K562 (cell line): ENCODE measurements at regions of chr16 and their contacts with region 1.

Region 1: GRCh38 chr16:16120382-16121184 is 102.7 kb downstream of the ABCC6 start:
- DNase-seq: peak; percentile 72 to 82 (median 76)
- ATAC-seq: peak; percentile 91
- H3K4me3 ChIP-seq: no peak overlapping the region
- H3K27ac ChIP-seq: peak overlapping the region; percentile 85
- H3K4me1 ChIP-seq: peaks cover 14 to 18% of the 10 kb centered on the region in 2 experiments; a peak in 4 of 5 replicates
- H3K27me3 ChIP-seq: no peaks in the 10 kb centered on the region
- CTCF ChIP-seq: no peak
- EP300 ChIP-seq: peak; percentile 89
- POLR2A ChIP-seq: no peak
- RAD21 ChIP-seq: no peak

Region 2: DNA sequence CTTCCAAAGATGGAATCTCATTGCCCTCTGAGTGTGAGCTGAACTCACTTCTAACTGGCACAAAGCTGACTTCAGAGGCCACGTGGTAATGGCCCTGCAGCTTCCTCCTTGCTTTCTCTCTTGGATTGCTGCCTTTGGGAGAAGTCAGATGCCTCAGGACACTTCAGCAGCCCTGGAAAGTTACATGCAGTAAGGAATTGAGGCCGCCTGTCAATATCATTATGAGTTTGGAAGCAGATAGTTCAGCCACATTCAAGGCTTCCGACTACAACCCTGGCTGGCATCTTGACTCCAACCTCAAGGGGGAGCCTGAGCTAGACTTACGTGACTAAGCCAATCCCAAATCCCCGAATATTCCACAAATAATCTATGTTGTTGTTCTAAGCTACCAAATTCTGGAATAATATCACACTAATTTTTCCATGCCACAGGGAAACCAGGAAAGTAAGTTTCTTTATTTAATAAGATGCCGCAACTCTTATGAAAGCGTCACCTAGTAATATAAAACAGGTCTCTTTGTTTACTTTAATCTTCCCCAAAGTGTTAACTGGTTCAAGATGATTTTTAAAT is 245.8 kb before region 1 on chr16:
- CTCF ChIA-PET with region 1: no interaction called
- POLR2A ChIA-PET with region 1: no interaction called
- in situ Hi-C with region 1: loop called (anchors 5 kb)
- intact Hi-C with region 1: no loop called
- DNase-seq: peak in 3 of 4 experiments; percentile 23 to 60 (median 42)
- ATAC-seq: peak; percentile 83
- H3K4me3 ChIP-seq: no peak overlapping the region
- H3K27ac ChIP-seq: peak overlapping the region; percentile 24; the same call in 1 of the 3 replicates
- H3K4me1 ChIP-seq: peaks cover 3 to 10% of the 10 kb centered on the region in 2 experiments; a peak in 4 of 5 replicates
- H3K27me3 ChIP-seq: no peaks in the 10 kb centered on the region
- CTCF ChIP-seq: peak; percentile 46 to 75 (median 67)
- EP300 ChIP-seq: no peak
- POLR2A ChIP-seq: no peak
- RAD21 ChIP-seq: peak; percentile 38 to 72; a peak in 3 of 4 replicates

Region 3: GRCh38 chr16:15919331-15919730 is 201.3 kb before region 1 on chr16:
- CTCF ChIA-PET with region 1: no interaction called
- POLR2A ChIA-PET with region 1: no interaction called
- in situ Hi-C with region 1: no loop called
- intact Hi-C with region 1: no loop called
- DNase-seq: no peak
- ATAC-seq: no peak
- H3K4me3 ChIP-seq: no peak overlapping the region
- H3K27ac ChIP-seq: no peak overlapping the region
- H3K4me1 ChIP-seq: no peaks in the 10 kb centered on the region
- H3K27me3 ChIP-seq: no peaks in the 10 kb centered on the region
- CTCF ChIP-seq: no peak
- EP300 ChIP-seq: no peak
- POLR2A ChIP-seq: no peak
- RAD21 ChIP-seq: no peak

Region 4: GRCh38 chr16:16033208-16033717 is 87.3 kb before region 1 on chr16:
- CTCF ChIA-PET with region 1: no interaction called
- POLR2A ChIA-PET with region 1: no interaction called
- in situ Hi-C with region 1: no loop called
- intact Hi-C with region 1: no loop called
- DNase-seq: peak in 1 of 4 experiments; percentile 16
- ATAC-seq: no peak
- H3K4me3 ChIP-seq: no peak overlapping the region
- H3K27ac ChIP-seq: no peak overlapping the region
- H3K4me1 ChIP-seq: peaks cover 0 to 5% of the 10 kb centered on the region in 2 experiments; a peak in 2 of 5 replicates
- H3K27me3 ChIP-seq: no peaks in the 10 kb centered on the region
- CTCF ChIP-seq: no peak
- EP300 ChIP-seq: no peak
- POLR2A ChIP-seq: no peak
- RAD21 ChIP-seq: no peak

Region 5: DNA sequence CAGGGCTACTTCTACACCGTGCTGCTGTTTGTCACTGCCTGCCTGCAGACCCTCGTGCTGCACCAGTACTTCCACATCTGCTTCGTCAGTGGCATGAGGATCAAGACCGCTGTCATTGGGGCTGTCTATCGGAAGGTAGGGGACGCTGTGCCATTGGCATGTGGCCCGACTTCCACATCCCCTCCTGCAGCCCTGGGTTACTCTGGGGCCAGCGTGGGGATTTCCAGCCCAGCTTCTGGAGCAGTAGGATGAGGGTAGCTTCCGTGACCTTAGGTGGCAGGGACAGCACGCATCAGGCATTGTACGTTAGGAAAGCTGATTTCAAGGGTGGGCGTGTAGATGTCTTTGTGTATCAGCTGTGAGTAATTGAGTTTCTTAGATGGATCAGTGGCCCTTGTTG is 74.7 kb before region 1 on chr16:
- CTCF ChIA-PET with region 1: no interaction called
- POLR2A ChIA-PET with region 1: no interaction called
- in situ Hi-C with region 1: no loop called
- intact Hi-C with region 1: no loop called
- DNase-seq: no peak
- ATAC-seq: no peak
- H3K4me3 ChIP-seq: no peak overlapping the region
- H3K27ac ChIP-seq: no peak overlapping the region
- H3K4me1 ChIP-seq: no peaks in the 10 kb centered on the region; a peak in 1 of 5 replicates
- H3K27me3 ChIP-seq: no peaks in the 10 kb centered on the region
- CTCF ChIP-seq: no peak
- EP300 ChIP-seq: no peak
- POLR2A ChIP-seq: no peak
- RAD21 ChIP-seq: no peak

Region 6: DNA sequence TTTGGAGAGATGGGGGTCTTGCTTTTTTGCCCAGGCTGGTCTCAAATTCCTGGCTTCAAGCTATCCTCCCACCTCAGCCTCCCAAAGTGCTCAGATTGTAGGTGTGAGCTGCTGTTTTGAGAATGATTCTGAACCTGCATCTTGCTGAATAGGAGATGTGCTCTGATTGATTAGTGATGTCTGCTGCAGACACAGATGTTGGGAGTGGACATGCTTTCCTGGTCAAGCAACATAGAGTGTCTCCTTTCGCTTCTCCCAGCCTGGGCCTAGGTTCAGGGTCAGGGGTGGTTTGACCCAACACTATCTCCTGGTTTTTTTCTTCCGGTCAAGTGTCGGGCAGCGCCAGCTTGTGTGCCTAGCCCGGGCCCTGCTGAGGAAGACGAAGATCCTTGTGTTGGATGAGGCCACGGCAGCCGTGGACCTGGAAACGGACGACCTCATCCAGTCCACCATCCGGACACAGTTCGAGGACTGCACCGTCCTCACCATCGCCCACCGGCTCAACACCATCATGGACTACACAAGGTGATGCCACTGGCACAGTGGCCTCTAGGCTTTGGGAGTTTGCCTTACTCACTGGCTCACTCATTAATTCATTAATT is 17.6 kb after region 1 on chr16:
- CTCF ChIA-PET with region 1: no interaction called
- POLR2A ChIA-PET with region 1: no interaction called
- in situ Hi-C with region 1: no loop called
- intact Hi-C with region 1: no loop called
- DNase-seq: no peak
- ATAC-seq: no peak
- H3K4me3 ChIP-seq: no peak overlapping the region
- H3K27ac ChIP-seq: no peak overlapping the region
- H3K4me1 ChIP-seq: no peaks in the 10 kb centered on the region
- H3K27me3 ChIP-seq: no peaks in the 10 kb centered on the region
- CTCF ChIP-seq: no peak
- EP300 ChIP-seq: no peak
- POLR2A ChIP-seq: no peak
- RAD21 ChIP-seq: no peak